ENCODE measurements at regions of chr21 and their contacts with region 1.

Region 1: GRCh38 chr21:31659536-31660258 is at the start of gene SOD1:
- DNase-seq: peak; percentile 96
- ATAC-seq: peak; percentile 94
- H3K4me3 Mint-ChIP-seq: peak within 1 kb of the TSS; percentile 97
- H3K27ac Mint-ChIP-seq: peak within 1 kb of the TSS; percentile 99
- H3K4me1 Mint-ChIP-seq: peaks cover 66% of the 10 kb centered on the region
- H3K27me3 Mint-ChIP-seq: no peaks in the 10 kb centered on the region
- CTCF ChIP-seq: no peak
- total RNA-seq, gene SOD1: 277 to 286 TPM

Region 2: DNA sequence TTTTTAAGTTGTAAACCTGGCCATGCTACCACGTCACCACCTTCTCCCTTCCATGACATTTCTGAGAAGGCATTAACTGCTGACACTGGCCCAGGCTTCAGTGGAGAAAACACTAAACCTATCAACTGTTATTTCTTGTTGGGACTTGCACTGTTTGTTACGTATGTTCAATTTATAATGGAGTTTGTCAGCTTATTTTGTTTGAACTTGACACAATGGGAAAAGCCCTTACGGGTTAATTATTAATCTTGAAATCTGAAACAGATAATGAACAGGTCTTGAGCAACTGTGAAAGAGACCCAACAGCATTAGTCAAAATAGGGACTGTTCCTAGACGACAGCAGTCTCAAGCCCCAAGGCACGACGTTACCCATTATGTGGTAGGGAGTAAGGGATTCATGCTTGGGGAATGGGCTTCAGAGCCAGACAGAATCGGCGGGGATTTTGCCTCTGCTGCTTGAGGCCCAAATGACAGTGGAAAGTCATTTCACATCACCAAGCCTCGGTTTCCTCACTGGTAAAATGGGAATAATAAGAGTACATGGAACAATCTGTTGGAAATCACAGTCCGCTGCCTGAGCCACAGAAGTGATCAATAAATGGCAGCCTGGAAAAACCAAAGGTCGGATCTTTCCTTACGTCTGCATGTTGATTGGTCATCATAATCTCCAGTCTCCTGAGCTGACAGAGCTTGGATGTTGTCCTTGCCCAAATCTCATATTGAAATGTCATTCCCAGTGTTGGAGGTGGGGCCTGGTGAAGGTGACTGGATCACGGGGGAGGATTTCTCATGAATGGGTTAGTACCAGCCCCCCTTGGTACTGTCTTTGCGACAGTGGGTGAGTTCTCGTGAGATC is 360.2 kb before region 1 on chr21:
- CTCF ChIA-PET with region 1: no interaction called
- POLR2A ChIA-PET with region 1: no interaction called
- intact Hi-C with region 1: no loop called
- DNase-seq: no peak
- ATAC-seq: no peak
- H3K4me3 Mint-ChIP-seq: no peak overlapping the region
- H3K27ac Mint-ChIP-seq: no peak overlapping the region
- H3K4me1 Mint-ChIP-seq: peaks cover 15% of the 10 kb centered on the region
- H3K27me3 Mint-ChIP-seq: no peaks in the 10 kb centered on the region
- CTCF ChIP-seq: no peak

Region 3: GRCh38 chr21:31731802-31732596 is 72.3 kb after region 1 on chr21 and contains the start of gene SCAF4:
- CTCF ChIA-PET with region 1: no interaction called
- POLR2A ChIA-PET with region 1: interaction called, 3 read pairs
- intact Hi-C with region 1: loop called (anchors 5 kb)
- DNase-seq: peak; percentile 80
- ATAC-seq: peak; percentile 91
- H3K4me3 Mint-ChIP-seq: no peak within 1 kb of the TSS
- H3K27ac Mint-ChIP-seq: peak within 1 kb of the TSS; percentile 78
- H3K4me1 Mint-ChIP-seq: peaks cover 9% of the 10 kb centered on the region
- H3K27me3 Mint-ChIP-seq: no peaks in the 10 kb centered on the region
- CTCF ChIP-seq: no peak
- total RNA-seq, gene SCAF4: 48.6 to 49.3 TPM